HCT116 (cell line): ENCODE measurements at regions of chr12 and their contacts with region 1.

Region 1: DNA sequence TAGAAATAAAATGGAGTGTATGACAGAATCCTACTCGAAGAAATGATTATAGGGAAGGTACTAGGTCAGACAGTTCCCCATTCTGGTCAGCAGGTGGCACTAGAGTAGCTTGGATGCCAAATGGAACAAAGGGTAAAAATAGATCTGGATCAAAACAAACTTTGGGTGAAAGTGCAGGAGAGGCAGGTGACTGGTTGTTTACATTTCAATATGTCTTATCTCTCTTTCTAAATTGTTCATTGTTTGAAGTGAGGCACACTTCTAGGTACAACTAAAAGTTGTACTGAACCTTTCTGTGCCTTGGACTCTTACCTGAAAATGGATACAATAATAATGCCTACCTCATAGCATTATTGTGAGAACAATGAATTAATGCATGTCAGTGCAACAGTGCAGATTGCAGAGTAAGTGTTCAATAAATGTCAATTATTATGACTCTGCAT is 62.0 kb upstream of the OSBPL8 start:
- DNase-seq: peak; percentile 44
- ATAC-seq: peak; percentile 88
- H3K4me3 ChIP-seq: no peak overlapping the region
- H3K27ac ChIP-seq: no peak overlapping the region
- H3K4me1 ChIP-seq: peaks cover 2 to 8% of the 10 kb centered on the region in 2 experiments; a peak in 2 of 4 replicates
- H3K27me3 ChIP-seq: no peaks in the 10 kb centered on the region
- CTCF ChIP-seq: peak; percentile 84 to 92 (median 90); a peak in 5 of 6 replicates
- POLR2A ChIP-seq: no peak
- RAD21 ChIP-seq: peak; percentile 97

Region 2: GRCh38 chr12:76790564-76791552 is 169.3 kb after region 1 on chr12:
- CTCF ChIA-PET with region 1: interaction called, 12 read pairs
- POLR2A ChIA-PET with region 1: no interaction called
- RAD21 ChIA-PET with region 1: no interaction called
- intact Hi-C with region 1: loop called (anchors 1 kb)
- DNase-seq: peak; percentile 6
- ATAC-seq: peak; percentile 42; the same call in 1 of the 2 replicates
- H3K4me3 ChIP-seq: no peak overlapping the region
- H3K27ac ChIP-seq: no peak overlapping the region
- H3K4me1 ChIP-seq: no peaks in the 10 kb centered on the region
- H3K27me3 ChIP-seq: no peaks in the 10 kb centered on the region
- CTCF ChIP-seq: peak; percentile 41 to 68 (median 62); a peak in 4 of 6 replicates
- POLR2A ChIP-seq: no peak
- RAD21 ChIP-seq: peak; percentile 83

Region 3: GRCh38 chr12:76927170-76927784 is 305.7 kb after region 1 on chr12:
- CTCF ChIA-PET with region 1: interaction called, 4 read pairs
- POLR2A ChIA-PET with region 1: no interaction called
- RAD21 ChIA-PET with region 1: no interaction called
- intact Hi-C with region 1: loop called (anchors 1 kb)
- DNase-seq: peak; percentile 27
- ATAC-seq: peak; percentile 86
- H3K4me3 ChIP-seq: no peak overlapping the region
- H3K27ac ChIP-seq: no peak overlapping the region
- H3K4me1 ChIP-seq: no peaks in the 10 kb centered on the region
- H3K27me3 ChIP-seq: no peaks in the 10 kb centered on the region
- CTCF ChIP-seq: peak; percentile 41 to 76 (median 63); a peak in 5 of 6 replicates
- POLR2A ChIP-seq: no peak
- RAD21 ChIP-seq: peak; percentile 66